ENCODE measurements at regions of chr10 and their contacts with region 1.

Region 1: GRCh38 chr10:73931767-73932619 is 21.1 kb downstream of the PLAU start:
- DNase-seq: no peak
- ATAC-seq: peak in 1 of 4 donors; percentile 59
- H3K4me3 ChIP-seq: no peak overlapping the region
- H3K27ac ChIP-seq: peak overlapping the region in 1 of 12 donors; percentile 27
- H3K4me1 ChIP-seq: peaks cover 0 to 24% (median 13%) of the 10 kb centered on the region in 12 donors
- H3K27me3 ChIP-seq: no peaks in the 10 kb centered on the region
- CTCF ChIP-seq: no peak
- POLR2A ChIP-seq: no peak

Region 2: GRCh38 chr10:73908853-73909538 is 23.0 kb before region 1 on chr10:
- intact Hi-C with region 1: loop called in 4 of 10 experiments (anchors 2 kb)
- DNase-seq: peak in 4 of 5 donors; percentile 56 to 70 (median 65)
- ATAC-seq: peak in 3 of 4 donors; percentile 32 to 66 (median 45)
- H3K4me3 ChIP-seq: peak overlapping the region in 3 of 12 donors; percentile 11 to 18 (median 13)
- H3K27ac ChIP-seq: peak overlapping the region in 11 of 12 donors; percentile 19 to 96 (median 72)
- H3K4me1 ChIP-seq: peaks cover 0 to 82% (median 53%) of the 10 kb centered on the region in 12 donors
- H3K27me3 ChIP-seq: no peaks in the 10 kb centered on the region
- CTCF ChIP-seq: no peak
- POLR2A ChIP-seq: no peak

Region 3: GRCh38 chr10:74208091-74208524 is 276.1 kb after region 1 on chr10:
- intact Hi-C with region 1: no loop called
- DNase-seq: peak in 2 of 5 donors; percentile 39 to 61
- ATAC-seq: peak in 3 of 4 donors; percentile 13 to 38 (median 33)
- H3K4me3 ChIP-seq: no peak overlapping the region
- H3K27ac ChIP-seq: no peak overlapping the region
- H3K4me1 ChIP-seq: peaks cover 0 to 2% (median 0%) of the 10 kb centered on the region in 12 donors
- H3K27me3 ChIP-seq: no peaks in the 10 kb centered on the region
- CTCF ChIP-seq: no peak
- POLR2A ChIP-seq: no peak